Activated CD4-positive, alpha-beta T cell treated with anti-CD3 and anti-CD28 coated beads, Interleukin-2, amount 10 ng/mL, durations not matched to agents 24 days and 14 days (primary cell): ENCODE measurements at regions of chr3 and their contacts with region 1.

Region 1: GRCh38 chr3:190701096-190701532 is 161.4 kb downstream of the GMNC start:
- DNase-seq: no peak
- H3K4me3 Mint-ChIP-seq: no peak overlapping the region
- H3K27ac Mint-ChIP-seq: no peak overlapping the region
- H3K4me1 Mint-ChIP-seq: peaks cover 5% of the 10 kb centered on the region
- H3K27me3 Mint-ChIP-seq: peaks cover 31% of the 10 kb centered on the region

Region 2: GRCh38 chr3:190224863-190225692 is 476.0 kb before region 1 on chr3:
- intact Hi-C with region 1: loop called (anchors 5 kb)
- DNase-seq: no peak
- H3K4me3 Mint-ChIP-seq: no peak overlapping the region
- H3K27ac Mint-ChIP-seq: no peak overlapping the region
- H3K4me1 Mint-ChIP-seq: peaks cover 2% of the 10 kb centered on the region
- H3K27me3 Mint-ChIP-seq: peaks cover 4% of the 10 kb centered on the region

Region 3: GRCh38 chr3:190491533-190492054 is 209.5 kb before region 1 on chr3:
- intact Hi-C with region 1: loop called (anchors 2 kb)
- DNase-seq: no peak
- H3K4me3 Mint-ChIP-seq: peak overlapping the region; percentile 11
- H3K27ac Mint-ChIP-seq: peak overlapping the region; percentile 12
- H3K4me1 Mint-ChIP-seq: peaks cover 22% of the 10 kb centered on the region
- H3K27me3 Mint-ChIP-seq: peaks cover 69% of the 10 kb centered on the region

Region 4: DNA sequence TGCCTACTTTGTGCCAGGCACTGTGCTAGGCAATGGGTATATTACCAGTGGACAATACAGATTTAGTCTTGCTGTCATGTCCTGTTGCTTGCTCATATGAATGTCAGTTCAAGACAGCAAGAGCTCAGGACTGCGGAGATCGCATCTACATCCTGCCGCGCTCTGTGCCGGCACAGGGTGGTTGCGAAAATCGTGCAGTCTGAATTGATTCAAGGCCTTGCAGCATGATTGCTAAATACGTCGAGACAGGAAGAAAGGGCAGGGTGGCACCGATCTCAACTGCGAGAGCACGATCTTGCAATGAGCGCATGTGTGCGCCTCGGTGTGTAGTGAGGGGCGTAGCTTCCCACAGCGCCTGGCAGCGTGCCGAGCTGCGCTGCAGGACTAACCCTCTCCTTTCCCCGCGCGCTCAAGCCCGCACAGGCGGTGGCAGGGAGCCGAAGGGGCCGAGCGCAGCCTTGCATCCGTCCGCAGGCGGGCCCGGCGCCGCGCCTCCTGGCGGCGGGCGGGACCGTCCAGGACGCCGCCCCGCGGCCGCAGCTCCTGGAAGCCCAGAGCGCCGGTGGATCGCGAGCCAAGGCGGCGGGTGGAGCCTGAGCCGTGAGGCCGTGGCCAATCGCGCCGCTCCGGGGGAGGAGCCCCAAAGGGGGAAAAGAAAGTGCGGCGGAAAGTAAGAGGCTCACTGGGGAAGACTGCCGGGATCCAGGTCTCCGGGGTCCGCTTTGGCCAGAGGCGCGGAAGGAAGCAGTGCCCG is 187.5 kb before region 1 on chr3 and contains the start of gene IL1RAP:
- intact Hi-C with region 1: no loop called
- DNase-seq: peak; percentile 97
- H3K4me3 Mint-ChIP-seq: peak within 1 kb of the TSS; percentile 90
- H3K27ac Mint-ChIP-seq: peak within 1 kb of the TSS; percentile 93
- H3K4me1 Mint-ChIP-seq: peaks cover 34% of the 10 kb centered on the region
- H3K27me3 Mint-ChIP-seq: peaks cover 3% of the 10 kb centered on the region
- total RNA-seq, gene IL1RAP: 24.8 and 27.8 TPM in 2 replicates

Region 5: GRCh38 chr3:190585805-190586630 is 115.1 kb before region 1 on chr3:
- intact Hi-C with region 1: loop called (anchors 1 kb)
- DNase-seq: peak; percentile 85
- H3K4me3 Mint-ChIP-seq: peak overlapping the region; percentile 65
- H3K27ac Mint-ChIP-seq: peak overlapping the region; percentile 94
- H3K4me1 Mint-ChIP-seq: peaks cover 45% of the 10 kb centered on the region
- H3K27me3 Mint-ChIP-seq: no peaks in the 10 kb centered on the region

Region 6: DNA sequence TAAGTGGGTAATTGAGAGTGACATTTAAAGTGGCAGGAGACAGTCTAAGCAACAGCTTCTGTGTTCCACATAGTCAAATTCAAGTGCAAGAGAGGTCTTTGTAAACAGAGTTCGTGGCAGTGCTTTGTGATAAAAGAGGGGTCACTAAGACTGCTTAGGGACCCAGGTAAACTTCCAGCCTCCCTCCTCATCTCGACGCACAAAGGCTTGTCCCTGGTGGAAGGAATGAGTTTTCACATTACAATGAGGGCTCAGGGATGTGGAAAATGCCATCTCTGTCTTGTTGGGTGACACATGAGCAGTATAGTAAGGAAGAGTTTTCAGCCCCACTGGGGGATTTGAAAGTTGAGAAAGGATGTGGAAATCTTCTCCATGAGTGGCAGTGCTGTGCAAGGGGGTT is 154.0 kb after region 1 on chr3:
- intact Hi-C with region 1: loop called (anchors 10 kb)
- DNase-seq: no peak
- H3K4me3 Mint-ChIP-seq: no peak overlapping the region
- H3K27ac Mint-ChIP-seq: no peak overlapping the region
- H3K4me1 Mint-ChIP-seq: no peaks in the 10 kb centered on the region
- H3K27me3 Mint-ChIP-seq: peaks cover 2% of the 10 kb centered on the region